MCF 10A (cell line): ENCODE measurements at regions of chr1 and their contacts with region 1.

Region 1: GRCh38 chr1:179081687-179082332 is at the start of gene TOR3A:
- DNase-seq: peak; percentile 95
- H3K4me3 Mint-ChIP-seq: peak within 1 kb of the TSS; percentile 99
- H3K27ac Mint-ChIP-seq: peak within 1 kb of the TSS; percentile 98
- H3K4me1 Mint-ChIP-seq: peaks cover 12% of the 10 kb centered on the region
- H3K27me3 Mint-ChIP-seq: no peaks in the 10 kb centered on the region
- CTCF ChIP-seq: no peak
- total RNA-seq, gene TOR3A: 24.9 and 31.3 TPM in 2 replicates

Region 2: GRCh38 chr1:179016747-179017549 is 64.9 kb before region 1 on chr1:
- CTCF ChIA-PET with region 1: interaction called, 5 read pairs
- POLR2A ChIA-PET with region 1: interaction called, 13 read pairs
- intact Hi-C with region 1: no loop called
- DNase-seq: peak; percentile 99
- H3K4me3 Mint-ChIP-seq: peak overlapping the region; percentile 26
- H3K27ac Mint-ChIP-seq: peak overlapping the region; percentile 54
- H3K4me1 Mint-ChIP-seq: peaks cover 29% of the 10 kb centered on the region
- H3K27me3 Mint-ChIP-seq: no peaks in the 10 kb centered on the region
- CTCF ChIP-seq: no peak

Region 3: DNA sequence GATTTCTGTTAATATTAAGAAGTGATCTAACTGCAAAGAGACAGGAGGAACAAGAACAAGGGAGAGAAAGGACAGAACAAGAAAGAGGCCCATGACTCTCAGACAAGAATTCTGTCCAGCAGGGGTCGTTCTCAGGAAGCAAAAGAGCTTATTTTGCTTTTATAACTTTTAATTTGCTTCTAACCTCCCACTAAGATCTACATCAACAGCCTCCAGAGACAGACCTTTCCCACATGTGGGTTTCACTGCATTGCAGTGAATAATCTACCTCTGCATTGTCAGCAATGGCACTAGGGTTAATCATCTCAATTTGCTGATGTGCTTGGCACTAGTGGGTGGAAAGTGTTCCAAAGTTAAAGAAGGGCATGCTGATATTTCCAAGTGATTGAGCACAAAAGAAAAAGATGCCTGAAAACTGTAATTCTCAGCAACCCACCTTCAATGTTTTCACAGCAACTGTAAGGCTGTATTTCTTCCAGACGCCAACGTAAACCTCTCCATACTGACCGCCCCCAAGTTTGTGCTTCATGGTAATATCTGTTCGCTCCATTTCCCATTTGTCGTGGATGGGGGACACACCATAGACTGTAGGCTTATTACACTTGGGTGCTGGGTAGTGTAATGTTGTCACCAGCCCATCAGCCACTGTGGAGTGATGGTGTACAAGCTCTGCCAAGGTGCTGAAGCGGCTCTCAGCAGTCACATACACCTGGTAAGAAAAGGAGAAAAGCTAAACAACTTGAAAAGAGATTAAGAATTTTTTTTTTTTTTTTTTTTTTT is 39.5 kb after region 1 on chr1:
- CTCF ChIA-PET with region 1: interaction called, 15 read pairs
- POLR2A ChIA-PET with region 1: interaction called, 8 read pairs
- intact Hi-C with region 1: no loop called
- DNase-seq: peak; percentile 76
- H3K4me3 Mint-ChIP-seq: no peak overlapping the region
- H3K27ac Mint-ChIP-seq: peak overlapping the region; percentile 82
- H3K4me1 Mint-ChIP-seq: peaks cover 18% of the 10 kb centered on the region
- H3K27me3 Mint-ChIP-seq: no peaks in the 10 kb centered on the region
- CTCF ChIP-seq: peak; percentile 73

Region 4: DNA sequence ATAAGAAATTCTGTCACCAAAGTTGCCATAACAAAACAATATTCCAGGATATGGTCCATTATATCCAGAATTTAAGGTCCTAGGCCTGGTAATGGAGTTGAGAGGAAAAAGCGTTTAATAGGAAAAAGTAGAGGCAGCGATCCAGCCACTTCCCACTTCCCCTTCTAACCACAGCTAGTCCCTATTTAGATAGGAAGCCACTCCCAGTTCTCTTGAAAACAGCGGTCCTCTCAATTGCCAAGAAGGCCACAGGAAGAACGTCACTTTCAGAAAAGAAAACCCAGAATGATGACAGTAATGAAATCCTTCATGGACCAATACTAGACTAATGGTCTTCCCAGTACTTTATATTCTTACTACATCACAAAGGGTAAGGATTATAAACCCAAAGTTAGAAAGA is 109.1 kb after region 1 on chr1:
- CTCF ChIA-PET with region 1: interaction called, 6 read pairs
- POLR2A ChIA-PET with region 1: interaction called, 3 read pairs
- intact Hi-C with region 1: loop called (anchors 1 kb)
- DNase-seq: no peak
- H3K4me3 Mint-ChIP-seq: no peak overlapping the region
- H3K27ac Mint-ChIP-seq: no peak overlapping the region
- H3K4me1 Mint-ChIP-seq: peaks cover 12% of the 10 kb centered on the region
- H3K27me3 Mint-ChIP-seq: no peaks in the 10 kb centered on the region
- CTCF ChIP-seq: no peak

Region 5: DNA sequence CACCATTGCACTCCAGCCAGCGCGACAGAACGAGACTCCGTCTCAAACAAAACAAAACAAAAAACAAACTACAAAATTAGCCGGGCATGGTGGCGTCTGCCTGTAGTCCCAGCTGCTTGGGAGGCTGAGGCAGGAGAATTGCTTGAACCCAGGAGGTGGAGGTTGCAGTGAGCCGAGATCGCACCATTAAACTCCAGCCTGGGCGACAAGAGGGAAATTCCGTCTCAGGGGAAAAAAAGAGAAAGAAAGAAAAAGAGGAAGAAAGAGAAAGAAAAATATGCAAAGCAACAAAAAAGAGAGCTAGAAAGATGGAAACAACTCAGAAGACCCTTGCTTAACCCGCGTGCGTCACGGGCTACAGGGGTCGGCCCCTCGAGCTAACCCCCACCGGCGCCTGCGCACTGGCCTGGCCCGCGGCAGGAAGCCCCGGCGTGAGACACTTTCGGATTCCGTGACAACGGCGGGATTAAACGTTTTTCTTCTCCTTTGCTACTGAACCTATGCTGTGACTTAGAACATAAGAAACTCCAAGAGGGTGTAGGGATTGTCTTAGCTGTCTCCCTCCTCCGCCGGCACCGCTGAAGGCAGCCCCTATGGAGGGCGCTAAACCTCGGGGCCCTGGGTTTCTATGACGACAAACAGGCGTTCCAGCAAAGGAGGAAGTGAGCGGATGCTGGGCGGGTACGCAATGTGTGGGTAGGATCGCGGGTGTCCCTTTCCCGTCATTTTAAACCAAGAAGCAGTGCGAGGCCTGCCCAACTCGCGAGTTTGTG is 283.7 kb after region 1 on chr1 and contains the start of gene AXDND1:
- CTCF ChIA-PET with region 1: interaction called, 134 read pairs
- POLR2A ChIA-PET with region 1: interaction called, 7 read pairs
- intact Hi-C with region 1: loop called (anchors 1 kb)
- DNase-seq: peak; percentile 79
- H3K4me3 Mint-ChIP-seq: peak within 1 kb of the TSS; percentile 77
- H3K27ac Mint-ChIP-seq: peak within 1 kb of the TSS; percentile 99
- H3K4me1 Mint-ChIP-seq: peaks cover 5% of the 10 kb centered on the region
- H3K27me3 Mint-ChIP-seq: no peaks in the 10 kb centered on the region
- CTCF ChIP-seq: no peak
- total RNA-seq, gene AXDND1: 1.1 and 1.7 TPM in 2 replicates

Region 6: DNA sequence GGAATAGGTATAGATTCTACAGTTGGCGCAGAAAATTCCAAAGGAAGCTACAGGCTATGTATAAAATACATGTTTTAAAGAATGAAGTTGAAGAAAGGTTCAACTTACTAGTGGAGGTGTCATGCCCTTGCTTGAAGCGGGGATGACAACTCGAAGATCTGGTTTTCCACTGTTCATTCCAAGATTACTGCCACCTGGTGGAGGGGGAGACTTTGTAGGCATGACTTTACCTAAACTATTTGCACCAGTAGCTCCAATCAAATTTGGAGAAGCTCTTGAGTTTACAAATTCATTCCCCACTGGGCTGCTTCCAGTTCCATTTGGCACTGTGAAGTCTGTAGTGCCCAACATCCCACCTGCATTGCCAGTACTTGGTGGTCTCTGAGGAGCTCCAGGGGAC is 365.7 kb after region 1 on chr1:
- CTCF ChIA-PET with region 1: no interaction called
- POLR2A ChIA-PET with region 1: no interaction called
- intact Hi-C with region 1: no loop called
- DNase-seq: peak; percentile 39
- H3K4me3 Mint-ChIP-seq: no peak overlapping the region
- H3K27ac Mint-ChIP-seq: no peak overlapping the region
- H3K4me1 Mint-ChIP-seq: no peaks in the 10 kb centered on the region
- H3K27me3 Mint-ChIP-seq: no peaks in the 10 kb centered on the region
- CTCF ChIP-seq: peak; percentile 25